Aorta (tissue), 5 donors: ENCODE measurements at regions of chr6 and their contacts with region 1.

Region 1: DNA sequence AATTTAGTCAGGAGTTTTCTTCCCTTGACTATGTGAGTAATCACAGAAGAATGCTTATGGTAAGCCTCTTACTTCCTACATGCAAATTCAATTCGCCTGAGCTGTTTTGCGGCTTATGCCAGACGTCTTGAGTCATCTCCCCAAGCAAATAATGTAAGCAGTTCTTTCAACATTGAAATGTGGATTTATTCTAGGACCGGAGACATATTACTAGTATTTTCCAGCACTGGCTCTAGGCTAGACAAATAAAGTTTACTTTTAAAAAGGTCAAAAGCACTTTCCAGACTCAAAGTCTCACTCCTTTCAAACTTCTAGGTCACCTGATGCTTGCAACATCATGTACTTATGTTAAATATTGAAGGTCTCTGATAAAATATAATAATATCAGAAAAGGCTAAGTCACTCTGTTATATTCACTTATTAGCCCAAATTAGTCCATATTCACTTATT is 38.1 kb upstream of the NOX3 start:
- DNase-seq: peak; percentile 72 to 79
- ATAC-seq: peak; percentile 92
- H3K4me3 ChIP-seq: no peak overlapping the region
- H3K27ac ChIP-seq: peak overlapping the region in 1 of 2 donors; percentile 94
- H3K4me1 ChIP-seq: peaks cover 0 to 18% of the 10 kb centered on the region in 2 donors
- H3K27me3 ChIP-seq: no peaks in the 10 kb centered on the region

Region 2: GRCh38 chr6:155418017-155418761 is 75.5 kb before region 1 on chr6:
- intact Hi-C with region 1: loop called in 1 of 2 experiments (anchors 10 kb)
- DNase-seq: peak; percentile 57 to 81
- ATAC-seq: peak; percentile 86
- H3K4me3 ChIP-seq: peak overlapping the region in 1 of 2 donors; percentile 24
- H3K27ac ChIP-seq: peak overlapping the region in 1 of 2 donors; percentile 86
- H3K4me1 ChIP-seq: peaks cover 0 to 2% of the 10 kb centered on the region in 2 donors
- H3K27me3 ChIP-seq: no peaks in the 10 kb centered on the region

Region 3: GRCh38 chr6:155505608-155505989 is 11.9 kb after region 1 on chr6:
- intact Hi-C with region 1: loop called in 1 of 2 experiments (anchors 1 kb)
- DNase-seq: no peak
- ATAC-seq: peak; percentile 11
- H3K4me3 ChIP-seq: no peak overlapping the region
- H3K27ac ChIP-seq: peak overlapping the region; percentile 82 to 88
- H3K4me1 ChIP-seq: peaks cover 0 to 3% of the 10 kb centered on the region in 2 donors
- H3K27me3 ChIP-seq: no peaks in the 10 kb centered on the region

Region 4: GRCh38 chr6:155530219-155530834 is 36.6 kb after region 1 on chr6:
- intact Hi-C with region 1: loop called in 1 of 2 experiments (anchors 1 kb)
- DNase-seq: no peak
- ATAC-seq: peak; percentile 81
- H3K4me3 ChIP-seq: no peak overlapping the region
- H3K27ac ChIP-seq: no peak overlapping the region
- H3K4me1 ChIP-seq: no peaks in the 10 kb centered on the region
- H3K27me3 ChIP-seq: no peaks in the 10 kb centered on the region